Posterior vena cava (tissue), 2 donors: ENCODE measurements at regions of chrX and their contacts with region 1.

Region 1: GRCh38 chrX:121546317-121546716 is 498.9 kb downstream of the GLUD2 start:
- DNase-seq: no peak

Region 2: DNA sequence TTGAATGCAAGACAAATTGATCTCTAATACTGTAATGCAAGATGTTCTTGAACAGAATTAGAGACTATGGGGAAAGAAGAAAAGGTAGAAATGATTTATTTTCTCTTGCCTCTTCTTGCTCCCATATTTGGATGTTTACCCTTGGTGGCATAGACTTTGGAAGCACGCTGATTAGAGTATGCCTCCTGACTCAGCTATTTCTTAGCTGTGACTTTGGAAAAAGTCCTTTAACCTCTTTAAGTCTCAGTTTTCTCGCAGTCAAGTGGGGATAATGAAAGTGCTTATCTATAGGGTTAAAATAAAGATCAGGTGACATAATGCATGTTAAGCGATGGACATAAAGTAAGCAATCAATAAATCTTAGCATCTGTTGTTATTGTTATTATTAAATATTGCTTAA is 46.6 kb after region 1 on chrX:
- intact Hi-C with region 1: loop called in 1 of 2 experiments (anchors 2 kb)
- DNase-seq: no peak

Region 3: DNA sequence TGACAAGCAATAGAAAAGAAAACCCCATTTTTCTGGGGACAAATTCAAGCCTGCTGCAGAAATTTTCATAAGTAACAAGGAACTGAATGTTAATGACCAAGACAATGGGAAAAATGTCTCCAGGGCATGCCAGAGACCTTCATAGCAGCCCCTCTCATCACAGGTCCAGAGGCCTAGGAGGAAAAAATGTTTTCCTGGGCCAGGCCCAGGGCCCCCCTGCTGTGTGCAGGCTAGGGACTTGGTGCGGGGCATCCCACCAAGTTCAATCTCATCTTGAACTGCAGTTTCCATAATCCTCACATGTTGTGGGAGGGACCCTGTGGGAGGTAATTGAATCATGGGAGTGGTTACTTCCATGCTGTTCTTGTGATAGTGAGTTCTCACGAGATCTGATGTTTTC is 1426.3 kb after region 1 on chrX:
- intact Hi-C with region 1: no loop called
- DNase-seq: no peak